Panc1 (cell line): ENCODE measurements at regions of chrX and their contacts with region 1.

Region 1: GRCh38 chrX:58025979-58026378 is 115.7 kb upstream of the ZXDA start:
- DNase-seq: peak; percentile 22
- ATAC-seq: 0 out of 2 replicates have a peak, but pooled peaks have one; percentile 65
- H3K4me3 ChIP-seq: no peak overlapping the region
- H3K27ac ChIP-seq: no peak overlapping the region
- H3K4me1 ChIP-seq: no peaks in the 10 kb centered on the region
- H3K27me3 ChIP-seq: no peaks in the 10 kb centered on the region
- CTCF ChIP-seq: peak; percentile 72

Region 2: GRCh38 chrX:57821703-57822375 is 204.1 kb before region 1 on chrX:
- CTCF ChIA-PET with region 1: no interaction called
- POLR2A ChIA-PET with region 1: no interaction called
- in situ Hi-C with region 1: no loop called
- intact Hi-C with region 1: loop called (anchors 1 kb)
- DNase-seq: no peak
- ATAC-seq: peak; percentile 92
- H3K4me3 ChIP-seq: peak overlapping the region; percentile 48 to 67
- H3K27ac ChIP-seq: peak overlapping the region; percentile 42
- H3K4me1 ChIP-seq: 0 out of 2 replicates have a peak, but pooled peaks cover 2% of the 10 kb centered on the region
- H3K27me3 ChIP-seq: no peaks in the 10 kb centered on the region
- CTCF ChIP-seq: peak; percentile 69

Region 3: DNA sequence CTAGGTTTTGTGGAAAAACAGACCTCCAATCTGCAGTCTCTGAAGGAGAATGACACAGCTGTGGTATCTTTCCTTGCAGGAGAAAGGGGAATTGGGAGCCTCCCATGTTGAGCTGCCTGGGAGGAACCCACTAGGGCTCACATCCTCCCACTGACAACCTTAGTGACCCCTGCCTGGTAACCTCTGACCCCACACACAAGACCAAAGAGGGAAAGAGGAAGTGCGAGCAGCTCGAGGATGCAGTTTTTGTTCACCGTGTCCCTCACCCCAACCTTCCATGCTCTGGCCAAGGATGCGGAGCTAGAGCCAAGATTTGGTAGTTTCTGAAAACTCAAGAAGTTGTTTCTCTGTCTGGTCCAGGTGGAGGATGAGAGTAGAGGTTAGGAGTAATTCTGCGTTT is 110.3 kb before region 1 on chrX:
- CTCF ChIA-PET with region 1: no interaction called
- POLR2A ChIA-PET with region 1: no interaction called
- in situ Hi-C with region 1: no loop called
- intact Hi-C with region 1: no loop called
- DNase-seq: no peak
- ATAC-seq: no peak
- H3K4me3 ChIP-seq: no peak overlapping the region
- H3K27ac ChIP-seq: no peak overlapping the region
- H3K4me1 ChIP-seq: peaks cover 5% of the 10 kb centered on the region; the same call in 1 of the 2 replicates
- H3K27me3 ChIP-seq: no peaks in the 10 kb centered on the region
- CTCF ChIP-seq: no peak

Region 4: GRCh38 chrX:57930051-57930450 is 95.9 kb before region 1 on chrX:
- CTCF ChIA-PET with region 1: no interaction called
- POLR2A ChIA-PET with region 1: no interaction called
- in situ Hi-C with region 1: no loop called
- intact Hi-C with region 1: loop called (anchors 10 kb)
- DNase-seq: no peak
- ATAC-seq: no peak
- H3K4me3 ChIP-seq: no peak overlapping the region
- H3K27ac ChIP-seq: no peak overlapping the region
- H3K4me1 ChIP-seq: no peaks in the 10 kb centered on the region
- H3K27me3 ChIP-seq: no peaks in the 10 kb centered on the region
- CTCF ChIP-seq: no peak

Region 5: GRCh38 chrX:57977992-57978391 is 48.0 kb before region 1 on chrX:
- CTCF ChIA-PET with region 1: no interaction called
- POLR2A ChIA-PET with region 1: no interaction called
- in situ Hi-C with region 1: no loop called
- intact Hi-C with region 1: loop called (anchors 5 kb)
- DNase-seq: no peak
- ATAC-seq: peak; percentile 80
- H3K4me3 ChIP-seq: peak overlapping the region in 1 of 2 experiments; percentile 2; a peak in 1 of 4 replicates
- H3K27ac ChIP-seq: no peak overlapping the region
- H3K4me1 ChIP-seq: no peaks in the 10 kb centered on the region
- H3K27me3 ChIP-seq: no peaks in the 10 kb centered on the region
- CTCF ChIP-seq: peak; percentile 49